ENCODE measurements at regions of chr15 and their contacts with region 1.

Region 1: GRCh38 chr15:71730277-71731144 is 79.8 kb upstream of the NR2E3 start:
- DNase-seq: peak; percentile 72
- H3K4me3 Mint-ChIP-seq: no peak overlapping the region
- H3K27ac Mint-ChIP-seq: no peak overlapping the region
- H3K4me1 Mint-ChIP-seq: peaks cover 2% of the 10 kb centered on the region
- H3K27me3 Mint-ChIP-seq: no peaks in the 10 kb centered on the region
- CTCF ChIP-seq: peak; percentile 54

Region 2: GRCh38 chr15:70974004-70974832 is 756.3 kb before region 1 on chr15:
- CTCF ChIA-PET with region 1: interaction called, 3 read pairs
- POLR2A ChIA-PET with region 1: no interaction called
- intact Hi-C with region 1: loop called (anchors 5 kb)
- DNase-seq: peak; percentile 52
- H3K4me3 Mint-ChIP-seq: no peak overlapping the region
- H3K27ac Mint-ChIP-seq: no peak overlapping the region
- H3K4me1 Mint-ChIP-seq: no peaks in the 10 kb centered on the region
- H3K27me3 Mint-ChIP-seq: no peaks in the 10 kb centered on the region
- CTCF ChIP-seq: peak; percentile 43

Region 3: DNA sequence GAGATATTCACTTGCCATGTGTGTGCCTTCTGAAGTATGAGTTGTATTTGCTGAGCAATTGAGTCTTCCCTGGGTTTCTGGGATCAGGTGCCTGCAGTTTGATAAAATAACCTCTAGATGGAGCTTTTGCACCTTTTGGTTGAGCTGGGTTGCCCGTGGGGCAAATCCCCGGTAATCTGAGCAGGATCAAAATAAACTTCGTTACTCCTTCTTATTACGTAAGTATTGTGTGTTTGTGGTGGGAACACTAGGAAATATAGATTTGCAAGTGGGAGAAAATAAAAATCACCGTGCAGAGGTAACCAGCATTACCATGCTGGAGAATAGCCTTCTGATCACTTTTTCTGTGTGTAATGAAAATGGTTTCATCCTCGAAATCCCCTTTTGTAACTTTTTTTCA is 197.5 kb before region 1 on chr15:
- CTCF ChIA-PET with region 1: interaction called, 5 read pairs
- POLR2A ChIA-PET with region 1: no interaction called
- intact Hi-C with region 1: loop called (anchors 1 kb)
- DNase-seq: peak; percentile 74
- H3K4me3 Mint-ChIP-seq: peak overlapping the region; percentile 24
- H3K27ac Mint-ChIP-seq: no peak overlapping the region
- H3K4me1 Mint-ChIP-seq: peaks cover 2% of the 10 kb centered on the region
- H3K27me3 Mint-ChIP-seq: no peaks in the 10 kb centered on the region
- CTCF ChIP-seq: peak; percentile 80

Region 4: DNA sequence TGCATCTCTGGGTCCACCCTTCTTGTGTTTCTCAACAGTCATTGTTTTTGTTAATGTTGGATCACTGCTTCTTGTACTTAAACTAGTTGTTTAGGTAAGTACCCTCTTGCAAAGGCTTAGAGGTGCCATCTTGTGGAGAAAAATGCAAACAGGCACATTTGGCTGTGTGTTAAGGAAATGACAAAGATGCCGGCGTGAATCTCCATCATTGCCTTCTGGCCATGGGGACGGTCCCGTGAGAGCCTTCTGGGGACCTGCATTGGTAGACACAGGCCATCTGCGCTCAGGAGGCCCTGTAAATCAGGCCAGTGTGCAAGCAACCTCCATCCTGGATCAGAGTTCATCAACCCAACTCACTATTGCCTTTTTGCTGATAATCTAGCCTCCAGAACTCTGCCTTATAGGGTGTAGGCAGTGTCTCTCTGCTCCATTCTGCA is 78.7 kb before region 1 on chr15:
- CTCF ChIA-PET with region 1: interaction called, 11 read pairs
- POLR2A ChIA-PET with region 1: interaction called, 3 read pairs
- intact Hi-C with region 1: no loop called
- DNase-seq: peak; percentile 78
- H3K4me3 Mint-ChIP-seq: no peak overlapping the region
- H3K27ac Mint-ChIP-seq: peak overlapping the region; percentile 75
- H3K4me1 Mint-ChIP-seq: peaks cover 12% of the 10 kb centered on the region
- H3K27me3 Mint-ChIP-seq: no peaks in the 10 kb centered on the region
- CTCF ChIP-seq: peak; percentile 68

Region 5: DNA sequence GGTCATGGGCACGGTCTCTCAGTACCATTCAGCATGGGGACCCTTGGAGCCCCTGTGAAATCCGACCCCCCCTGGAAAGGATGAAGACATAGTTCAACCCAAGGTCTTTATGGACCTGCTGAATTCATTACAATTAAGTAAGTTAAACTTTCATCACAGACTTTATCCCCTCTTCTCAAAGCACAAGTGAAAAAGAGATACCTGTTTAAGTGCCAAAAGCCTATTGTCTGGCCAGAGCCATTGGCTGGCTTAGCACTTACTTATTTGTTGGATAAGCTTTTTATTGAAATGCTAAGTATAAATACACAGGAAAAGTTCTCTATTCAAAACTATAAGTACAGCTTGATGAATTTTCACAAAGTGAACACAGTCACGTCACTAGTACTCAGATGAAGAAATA is 48.5 kb before region 1 on chr15:
- CTCF ChIA-PET with region 1: no interaction called
- POLR2A ChIA-PET with region 1: no interaction called
- intact Hi-C with region 1: no loop called
- DNase-seq: no peak
- H3K4me3 Mint-ChIP-seq: no peak overlapping the region
- H3K27ac Mint-ChIP-seq: no peak overlapping the region
- H3K4me1 Mint-ChIP-seq: peaks cover 8% of the 10 kb centered on the region
- H3K27me3 Mint-ChIP-seq: no peaks in the 10 kb centered on the region
- CTCF ChIP-seq: no peak

Region 6: GRCh38 chr15:71743861-71744382 is 13.4 kb after region 1 on chr15:
- CTCF ChIA-PET with region 1: interaction called, 17 read pairs
- POLR2A ChIA-PET with region 1: no interaction called
- intact Hi-C with region 1: no loop called
- DNase-seq: peak; percentile 72
- H3K4me3 Mint-ChIP-seq: no peak overlapping the region
- H3K27ac Mint-ChIP-seq: no peak overlapping the region
- H3K4me1 Mint-ChIP-seq: peaks cover 19% of the 10 kb centered on the region
- H3K27me3 Mint-ChIP-seq: no peaks in the 10 kb centered on the region
- CTCF ChIP-seq: peak; percentile 56

Region 7: DNA sequence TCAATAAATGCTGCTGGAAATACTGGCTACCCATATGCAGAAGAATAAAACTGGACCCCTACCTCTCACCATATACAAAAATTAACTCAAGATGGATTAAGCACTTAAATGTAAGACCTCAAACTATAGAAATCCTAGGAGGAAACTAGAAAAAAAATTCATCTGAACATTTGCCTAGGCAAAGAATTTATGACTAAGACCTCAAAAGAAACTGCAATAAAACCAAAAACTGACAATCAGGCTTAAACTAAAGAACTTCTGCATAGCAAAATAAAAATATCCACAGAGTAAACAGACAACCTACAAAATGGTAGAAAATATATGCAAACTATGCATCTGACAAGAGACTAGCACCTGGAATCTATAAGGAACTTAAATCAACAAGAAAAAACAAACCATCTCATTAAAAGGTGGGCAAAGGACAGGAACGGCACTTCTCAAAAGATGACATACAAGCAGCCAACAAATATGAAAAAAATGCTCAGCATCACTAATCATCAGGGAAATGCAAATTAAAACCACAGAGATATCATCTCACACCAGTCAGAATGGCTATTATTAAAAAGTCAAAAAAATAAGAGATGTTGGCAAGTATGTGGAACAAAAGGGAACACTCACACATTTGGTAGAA is 340.4 kb after region 1 on chr15:
- CTCF ChIA-PET with region 1: no interaction called
- POLR2A ChIA-PET with region 1: no interaction called
- intact Hi-C with region 1: no loop called
- DNase-seq: no peak
- H3K4me3 Mint-ChIP-seq: no peak overlapping the region
- H3K27ac Mint-ChIP-seq: no peak overlapping the region
- H3K4me1 Mint-ChIP-seq: no peaks in the 10 kb centered on the region
- H3K27me3 Mint-ChIP-seq: no peaks in the 10 kb centered on the region
- CTCF ChIP-seq: no peak

Measured in MCF 10A (cell line).